ENCODE measurements at regions of chr6 and their contacts with region 1.

Region 1: DNA sequence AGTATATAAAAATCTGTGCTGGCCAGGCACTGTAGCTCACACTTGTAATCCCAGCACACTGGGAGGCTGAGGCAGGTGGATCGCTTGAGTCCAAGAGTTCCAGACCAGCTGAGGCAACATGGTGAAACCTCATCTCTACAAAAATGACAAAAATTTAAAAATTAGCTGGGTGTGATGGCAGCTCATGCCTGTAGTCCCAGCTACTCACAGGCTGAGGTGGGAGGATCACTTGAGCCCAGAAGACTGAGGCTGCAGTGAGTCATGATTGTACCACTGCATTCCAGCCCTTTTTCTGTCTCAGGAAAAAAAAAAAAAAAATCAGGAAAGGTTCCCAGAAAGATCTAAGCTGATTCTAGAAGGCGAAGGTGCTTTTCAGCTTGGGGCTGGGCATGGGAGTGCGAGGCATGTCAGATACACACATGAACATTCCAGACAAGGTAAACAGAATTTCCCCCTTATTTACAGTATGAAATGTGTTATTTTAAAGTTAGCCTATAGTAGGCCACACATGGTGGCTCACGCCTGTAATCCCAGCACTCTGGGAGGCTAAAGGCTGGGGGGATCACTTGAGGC is 5.7 kb downstream of the RMND1 start:
- DNase-seq: no peak
- ATAC-seq: peak in 1 of 4 donors; percentile 40
- H3K4me3 ChIP-seq: no peak overlapping the region
- H3K27ac ChIP-seq: peak overlapping the region; percentile 63
- H3K4me1 ChIP-seq: peaks cover 11% of the 10 kb centered on the region
- H3K27me3 ChIP-seq: no peaks in the 10 kb centered on the region
- CTCF ChIP-seq: no peak

Region 2: GRCh38 chr6:151290877-151291721 is 155.1 kb before region 1 on chr6:
- intact Hi-C with region 1: no loop called
- DNase-seq: peak; percentile 30 to 66
- ATAC-seq: peak in 1 of 4 donors; percentile 58
- H3K4me3 ChIP-seq: no peak overlapping the region
- H3K27ac ChIP-seq: no peak overlapping the region
- H3K4me1 ChIP-seq: no peaks in the 10 kb centered on the region
- H3K27me3 ChIP-seq: no peaks in the 10 kb centered on the region
- CTCF ChIP-seq: no peak

Region 3: DNA sequence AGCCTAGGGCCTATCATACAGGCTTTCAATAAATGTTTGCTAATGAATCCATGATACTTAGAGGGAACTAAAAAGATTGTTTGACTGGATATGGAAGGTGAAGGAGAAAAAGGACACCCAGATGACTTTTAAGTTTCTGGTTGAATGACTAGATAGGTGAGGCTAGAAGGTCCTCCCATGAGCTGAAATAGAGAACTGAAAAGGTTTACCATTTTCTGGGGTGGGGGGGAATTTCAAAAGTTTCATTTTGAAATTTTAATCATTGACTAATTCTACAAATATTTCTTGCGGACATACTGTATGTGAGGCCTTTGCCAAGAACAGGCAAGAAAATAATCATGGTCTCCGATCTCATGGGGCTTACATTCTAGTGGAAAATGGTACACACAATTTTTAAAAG is 36.9 kb before region 1 on chr6:
- intact Hi-C with region 1: loop called in 1 of 2 experiments (anchors 5 kb)
- DNase-seq: no peak
- ATAC-seq: no peak
- H3K4me3 ChIP-seq: no peak overlapping the region
- H3K27ac ChIP-seq: no peak overlapping the region
- H3K4me1 ChIP-seq: peaks cover 3% of the 10 kb centered on the region
- H3K27me3 ChIP-seq: no peaks in the 10 kb centered on the region
- CTCF ChIP-seq: no peak

Measured in psoas muscle (tissue), 8 donors.